ENCODE measurements at regions of chr16 and their contacts with region 1.

Region 1: GRCh38 chr16:83630979-83631378 is 176.8 kb upstream of the HSBP1 start:
- DNase-seq: no peak
- H3K4me3 Mint-ChIP-seq: no peak overlapping the region
- H3K27ac Mint-ChIP-seq: no peak overlapping the region
- H3K4me1 Mint-ChIP-seq: no peaks in the 10 kb centered on the region
- H3K27me3 Mint-ChIP-seq: peaks cover 40% of the 10 kb centered on the region
- CTCF ChIP-seq: no peak

Region 2: GRCh38 chr16:83520596-83520995 is 110.4 kb before region 1 on chr16:
- CTCF ChIA-PET with region 1: no interaction called
- intact Hi-C with region 1: no loop called
- DNase-seq: no peak
- H3K4me3 Mint-ChIP-seq: no peak overlapping the region
- H3K27ac Mint-ChIP-seq: no peak overlapping the region
- H3K4me1 Mint-ChIP-seq: no peaks in the 10 kb centered on the region
- H3K27me3 Mint-ChIP-seq: no peaks in the 10 kb centered on the region
- CTCF ChIP-seq: no peak

Region 3: GRCh38 chr16:83552228-83552627 is 78.8 kb before region 1 on chr16:
- CTCF ChIA-PET with region 1: no interaction called
- intact Hi-C with region 1: no loop called
- DNase-seq: no peak
- H3K4me3 Mint-ChIP-seq: no peak overlapping the region
- H3K27ac Mint-ChIP-seq: no peak overlapping the region
- H3K4me1 Mint-ChIP-seq: no peaks in the 10 kb centered on the region
- H3K27me3 Mint-ChIP-seq: no peaks in the 10 kb centered on the region
- CTCF ChIP-seq: no peak

Region 4: GRCh38 chr16:83606486-83607030 is 24.4 kb before region 1 on chr16:
- CTCF ChIA-PET with region 1: no interaction called
- intact Hi-C with region 1: loop called (anchors 1 kb)
- DNase-seq: peak; percentile 25
- H3K4me3 Mint-ChIP-seq: no peak overlapping the region
- H3K27ac Mint-ChIP-seq: no peak overlapping the region
- H3K4me1 Mint-ChIP-seq: no peaks in the 10 kb centered on the region
- H3K27me3 Mint-ChIP-seq: no peaks in the 10 kb centered on the region
- CTCF ChIP-seq: peak; percentile 8